HEK293T (cell line): ENCODE measurements at regions of chr15 and their contacts with region 1.

Region 1: DNA sequence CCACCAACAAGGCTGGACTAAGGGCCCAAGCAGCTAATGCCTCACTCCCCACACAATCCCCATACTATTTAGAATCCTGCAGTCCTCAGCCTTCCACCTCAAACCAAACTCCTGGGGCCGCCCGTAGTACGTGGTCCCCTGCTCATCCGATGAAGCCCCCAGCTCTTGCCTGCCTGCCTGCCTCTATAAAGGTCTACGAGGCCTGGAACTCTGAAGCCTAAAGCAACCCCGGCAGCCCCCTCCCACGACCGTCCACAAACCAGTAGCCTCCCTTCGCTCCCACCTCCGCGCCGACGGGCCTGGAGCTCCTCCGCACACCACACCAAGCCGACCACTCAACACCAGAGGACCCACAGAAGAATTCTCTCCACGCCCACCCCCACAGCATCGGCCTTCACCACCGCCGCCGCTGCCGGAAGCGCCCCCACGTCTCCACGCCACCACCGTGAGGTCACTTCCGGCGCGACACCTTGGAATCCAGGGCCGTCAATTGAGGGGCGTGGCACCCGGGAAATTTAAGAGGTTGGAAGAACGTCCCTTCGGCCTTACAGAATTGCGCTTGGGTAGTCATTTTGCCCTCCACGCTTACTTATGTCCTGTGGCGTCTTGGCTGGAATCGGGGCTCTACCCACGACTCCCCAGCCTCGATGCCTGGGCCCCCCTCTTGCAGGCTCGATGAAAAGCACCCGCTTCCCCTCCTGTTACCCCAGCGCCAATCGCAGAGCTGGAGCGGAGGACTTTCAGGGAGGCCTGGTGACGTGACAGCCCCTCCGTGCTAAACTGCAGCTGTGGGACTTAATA is at the start of gene EDC3:
- DNase-seq: peak; percentile 95

Region 2: DNA sequence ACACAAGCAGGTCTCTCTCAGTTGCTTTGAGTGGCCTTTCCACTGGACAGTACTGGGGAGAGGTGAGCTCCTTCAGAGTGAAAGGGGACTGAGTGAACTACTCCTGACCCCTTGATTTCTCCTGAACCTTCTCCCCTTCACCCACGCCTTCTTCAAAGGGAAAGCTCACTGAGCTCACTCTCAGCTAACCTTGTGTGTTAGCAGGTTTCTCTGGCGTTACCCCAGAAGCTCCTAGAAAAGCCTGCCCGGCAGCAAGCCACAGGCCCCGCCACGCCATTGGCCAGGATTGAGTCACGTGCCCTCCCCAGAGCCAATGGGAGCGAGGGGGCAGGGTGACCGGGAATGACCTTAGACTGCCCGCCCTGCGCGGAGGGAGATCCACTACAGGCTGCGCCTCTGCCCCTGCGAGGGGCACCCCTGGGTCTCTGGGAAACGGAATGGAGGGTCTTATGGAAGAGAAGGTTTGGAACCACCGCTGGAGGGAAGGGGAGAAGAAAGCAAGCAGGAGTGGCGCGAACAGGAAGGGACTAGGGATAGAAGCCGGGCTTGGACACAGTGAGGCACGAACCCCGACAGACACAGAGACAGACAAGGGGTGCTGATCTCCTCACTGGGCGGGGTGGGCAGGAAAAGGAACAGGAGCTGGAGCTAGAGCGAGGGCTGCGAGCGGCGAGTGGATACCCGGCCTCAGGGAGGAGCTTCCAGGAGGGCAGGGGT is 97.5 kb before region 1 on chr15:
- CTCF ChIA-PET with region 1: no interaction called
- POLR2A ChIA-PET with region 1: no interaction called
- DNase-seq: peak; percentile 91

Region 3: DNA sequence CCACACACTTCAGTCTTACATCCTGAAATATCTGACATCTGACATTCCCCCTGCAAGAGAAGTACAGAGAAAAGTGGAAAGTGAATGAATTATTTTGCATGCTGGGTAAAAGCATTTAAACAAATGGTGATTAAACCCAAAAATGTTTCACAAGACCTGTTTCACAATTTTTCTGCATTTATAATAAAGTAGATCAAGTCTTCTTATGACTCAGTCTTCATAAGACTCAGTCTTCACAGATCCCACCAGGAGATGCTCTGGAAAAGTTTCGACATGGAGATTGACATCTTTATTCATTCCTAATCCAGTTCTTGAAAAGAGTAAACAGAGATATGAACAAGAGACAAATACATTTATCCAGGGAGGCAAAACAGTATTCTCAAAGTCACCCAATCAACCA is 13.2 kb after region 1 on chr15:
- CTCF ChIA-PET with region 1: no interaction called
- POLR2A ChIA-PET with region 1: interaction called, 15 read pairs
- DNase-seq: no peak

Region 4: DNA sequence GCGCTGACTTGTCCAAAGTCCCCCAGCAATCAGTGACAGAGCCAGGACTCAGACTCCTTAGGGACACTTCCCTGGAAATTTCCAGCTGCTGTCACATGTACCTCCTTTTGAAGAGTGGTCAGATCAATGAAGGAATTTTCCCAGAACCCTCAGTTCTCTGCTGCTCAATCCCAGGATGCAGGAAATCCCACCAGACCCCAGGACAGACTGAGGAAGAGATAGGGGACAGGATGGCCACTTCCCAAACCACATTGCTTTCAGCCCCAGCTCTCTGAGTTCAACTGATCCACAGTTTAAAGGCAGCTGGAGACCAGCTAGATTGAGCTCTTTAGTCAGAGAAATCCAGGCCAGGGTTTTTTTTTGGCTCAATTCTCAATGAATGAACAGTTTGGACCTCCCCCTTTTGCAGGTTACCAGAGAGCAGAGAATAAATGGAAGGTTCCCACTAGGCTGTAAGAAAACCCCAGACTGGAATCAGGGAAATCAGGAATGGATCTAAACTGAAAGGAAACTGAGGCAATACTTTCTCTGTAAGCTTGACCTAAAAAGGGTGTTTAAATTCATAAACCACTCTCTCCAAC is 28.0 kb after region 1 on chr15:
- CTCF ChIA-PET with region 1: no interaction called
- POLR2A ChIA-PET with region 1: interaction called, 13 read pairs
- DNase-seq: peak; percentile 72